ENCODE measurements at regions of chr4 and their contacts with region 1.

Region 1: DNA sequence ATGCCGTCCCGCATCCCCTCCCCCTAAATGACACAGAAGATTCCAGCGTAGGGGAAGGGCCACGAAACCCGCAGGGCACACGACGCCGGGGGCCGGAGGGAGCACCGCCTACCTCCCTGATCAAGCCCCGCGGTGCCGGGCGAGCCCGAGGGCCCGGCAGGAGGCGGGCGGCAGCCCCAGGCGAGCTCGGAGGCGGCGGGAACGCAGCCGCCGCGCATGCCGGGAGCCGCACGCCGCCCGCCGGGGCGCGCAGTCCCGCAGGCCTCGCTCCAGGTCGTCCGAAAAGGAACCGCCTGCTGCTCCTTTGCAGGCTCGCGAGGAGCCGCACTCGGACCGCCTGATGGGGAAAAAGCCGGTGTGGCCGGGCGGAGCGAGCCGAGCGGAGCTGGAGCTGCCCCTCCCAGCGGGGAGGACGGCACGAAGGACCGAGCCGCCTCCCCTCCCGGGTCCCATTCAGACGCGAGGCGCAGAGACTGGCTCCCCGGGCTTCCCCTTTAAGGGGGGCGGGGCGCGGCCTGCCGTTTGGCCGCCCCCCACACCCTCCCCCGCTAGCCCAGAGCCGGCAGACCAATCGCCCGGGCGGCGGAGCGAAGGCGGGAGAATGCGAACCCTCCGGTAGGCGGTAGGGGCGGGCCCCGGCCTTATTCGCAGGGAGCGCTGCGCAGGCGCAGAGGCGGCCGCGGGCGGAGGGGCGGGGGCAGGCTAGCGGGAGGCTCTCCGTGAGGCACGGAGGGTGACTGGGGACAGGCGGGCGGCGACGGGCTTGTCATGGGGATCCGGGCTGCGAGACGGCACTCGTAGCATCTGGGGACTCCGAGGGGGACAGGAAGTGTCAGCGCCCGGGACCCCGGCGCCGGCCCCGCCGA is 561 bp upstream of the ING2 start:
- DNase-seq: peak; percentile 99
- ATAC-seq: peak; percentile 80
- H3K4me3 Mint-ChIP-seq: peak overlapping the region; percentile 85
- H3K27ac Mint-ChIP-seq: peak overlapping the region; percentile 95
- H3K4me1 Mint-ChIP-seq: peaks cover 33% of the 10 kb centered on the region
- H3K27me3 Mint-ChIP-seq: no peaks in the 10 kb centered on the region

Region 2: GRCh38 chr4:183407128-183407585 is 97.1 kb before region 1 on chr4:
- CTCF ChIA-PET with region 1: no interaction called
- POLR2A ChIA-PET with region 1: no interaction called
- intact Hi-C with region 1: loop called in 1 of 2 experiments (anchors 1 kb)
- DNase-seq: peak; percentile 95
- ATAC-seq: peak; percentile 98
- H3K4me3 Mint-ChIP-seq: peak overlapping the region; percentile 78
- H3K27ac Mint-ChIP-seq: peak overlapping the region; percentile 88
- H3K4me1 Mint-ChIP-seq: peaks cover 18% of the 10 kb centered on the region
- H3K27me3 Mint-ChIP-seq: no peaks in the 10 kb centered on the region

Region 3: GRCh38 chr4:183659029-183659871 is 155.0 kb after region 1 on chr4 and contains the starts of genes RWDD4 and TRAPPC11:
- CTCF ChIA-PET with region 1: no interaction called
- POLR2A ChIA-PET with region 1: interaction called, 5 read pairs
- intact Hi-C with region 1: loop called (anchors 1 kb)
- DNase-seq: peak; percentile 97
- ATAC-seq: peak; percentile 100
- H3K4me3 Mint-ChIP-seq: peak within 1 kb of the TSS; percentile 97
- H3K27ac Mint-ChIP-seq: peak within 1 kb of the TSS; percentile 95
- H3K4me1 Mint-ChIP-seq: peaks cover 35% of the 10 kb centered on the region
- H3K27me3 Mint-ChIP-seq: no peaks in the 10 kb centered on the region
- total RNA-seq, gene RWDD4: 19.4 to 26.5 TPM
- total RNA-seq, gene TRAPPC11: 27.7 to 37.9 TPM

Region 4: GRCh38 chr4:184538023-184538599 is 1033.8 kb after region 1 on chr4:
- CTCF ChIA-PET with region 1: no interaction called
- POLR2A ChIA-PET with region 1: no interaction called
- intact Hi-C with region 1: loop called in 1 of 2 experiments (anchors 10 kb)
- DNase-seq: peak; percentile 69
- ATAC-seq: peak; percentile 43
- H3K4me3 Mint-ChIP-seq: peak overlapping the region; percentile 92
- H3K27ac Mint-ChIP-seq: peak overlapping the region; percentile 95
- H3K4me1 Mint-ChIP-seq: peaks cover 45% of the 10 kb centered on the region
- H3K27me3 Mint-ChIP-seq: no peaks in the 10 kb centered on the region

Region 5: GRCh38 chr4:185203486-185204237 is 1699.4 kb after region 1 on chr4 and contains the start of gene CFAP97:
- CTCF ChIA-PET with region 1: no interaction called
- POLR2A ChIA-PET with region 1: no interaction called
- intact Hi-C with region 1: loop called in 1 of 2 experiments (anchors 5 kb)
- DNase-seq: peak; percentile 82
- ATAC-seq: peak; percentile 85
- H3K4me3 Mint-ChIP-seq: peak within 1 kb of the TSS; percentile 94
- H3K27ac Mint-ChIP-seq: peak within 1 kb of the TSS; percentile 97
- H3K4me1 Mint-ChIP-seq: peaks cover 41% of the 10 kb centered on the region
- H3K27me3 Mint-ChIP-seq: no peaks in the 10 kb centered on the region
- total RNA-seq, gene CFAP97: 54.6 to 81.8 TPM

Measured in activated CD4-positive, alpha-beta T cell treated with anti-CD3 and anti-CD28 coated beads for 36 hours (primary cell).